Activated CD8-positive, alpha-beta memory T cell treated with anti-CD3 and anti-CD28 coated beads, Interleukin-2, amount 10 ng/mL, durations not matched to agents 7 days and 5 days (primary cell): ENCODE measurements at regions of chr17 and their contacts with region 1.

Region 1: GRCh38 chr17:69414408-69415274 is at the start of gene MAP2K6:
- DNase-seq: peak; percentile 93
- ATAC-seq: peak; percentile 98
- H3K4me3 Mint-ChIP-seq: no peak within 1 kb of the TSS
- H3K27ac Mint-ChIP-seq: no peak within 1 kb of the TSS
- H3K4me1 Mint-ChIP-seq: peaks cover 10% of the 10 kb centered on the region
- H3K27me3 Mint-ChIP-seq: no peaks in the 10 kb centered on the region
- total RNA-seq, gene MAP2K6: 6.3 to 8.8 TPM

Region 2: GRCh38 chr17:69111794-69112193 is 302.8 kb before region 1 on chr17:
- CTCF ChIA-PET with region 1: no interaction called
- DNase-seq: no peak
- ATAC-seq: no peak
- H3K4me3 Mint-ChIP-seq: no peak overlapping the region
- H3K27ac Mint-ChIP-seq: no peak overlapping the region
- H3K4me1 Mint-ChIP-seq: no peaks in the 10 kb centered on the region
- H3K27me3 Mint-ChIP-seq: no peaks in the 10 kb centered on the region

Region 3: GRCh38 chr17:69523244-69523861 is 108.7 kb after region 1 on chr17:
- CTCF ChIA-PET with region 1: interaction called, 14 read pairs
- DNase-seq: peak; percentile 44
- ATAC-seq: peak; percentile 47
- H3K4me3 Mint-ChIP-seq: no peak overlapping the region
- H3K27ac Mint-ChIP-seq: peak overlapping the region; percentile 9
- H3K4me1 Mint-ChIP-seq: peaks cover 5% of the 10 kb centered on the region
- H3K27me3 Mint-ChIP-seq: no peaks in the 10 kb centered on the region